Calu3 (cell line): ENCODE measurements at regions of chr10 and their contacts with region 1.

Region 1: GRCh38 chr10:51422311-51423120 is 276.9 kb downstream of the CSTF2T start:
- DNase-seq: peak; percentile 64
- H3K4me3 Mint-ChIP-seq: no peak overlapping the region
- H3K27ac Mint-ChIP-seq: no peak overlapping the region
- H3K4me1 Mint-ChIP-seq: no peaks in the 10 kb centered on the region
- H3K27me3 Mint-ChIP-seq: peaks cover 15% of the 10 kb centered on the region
- CTCF ChIP-seq: peak; percentile 41

Region 2: DNA sequence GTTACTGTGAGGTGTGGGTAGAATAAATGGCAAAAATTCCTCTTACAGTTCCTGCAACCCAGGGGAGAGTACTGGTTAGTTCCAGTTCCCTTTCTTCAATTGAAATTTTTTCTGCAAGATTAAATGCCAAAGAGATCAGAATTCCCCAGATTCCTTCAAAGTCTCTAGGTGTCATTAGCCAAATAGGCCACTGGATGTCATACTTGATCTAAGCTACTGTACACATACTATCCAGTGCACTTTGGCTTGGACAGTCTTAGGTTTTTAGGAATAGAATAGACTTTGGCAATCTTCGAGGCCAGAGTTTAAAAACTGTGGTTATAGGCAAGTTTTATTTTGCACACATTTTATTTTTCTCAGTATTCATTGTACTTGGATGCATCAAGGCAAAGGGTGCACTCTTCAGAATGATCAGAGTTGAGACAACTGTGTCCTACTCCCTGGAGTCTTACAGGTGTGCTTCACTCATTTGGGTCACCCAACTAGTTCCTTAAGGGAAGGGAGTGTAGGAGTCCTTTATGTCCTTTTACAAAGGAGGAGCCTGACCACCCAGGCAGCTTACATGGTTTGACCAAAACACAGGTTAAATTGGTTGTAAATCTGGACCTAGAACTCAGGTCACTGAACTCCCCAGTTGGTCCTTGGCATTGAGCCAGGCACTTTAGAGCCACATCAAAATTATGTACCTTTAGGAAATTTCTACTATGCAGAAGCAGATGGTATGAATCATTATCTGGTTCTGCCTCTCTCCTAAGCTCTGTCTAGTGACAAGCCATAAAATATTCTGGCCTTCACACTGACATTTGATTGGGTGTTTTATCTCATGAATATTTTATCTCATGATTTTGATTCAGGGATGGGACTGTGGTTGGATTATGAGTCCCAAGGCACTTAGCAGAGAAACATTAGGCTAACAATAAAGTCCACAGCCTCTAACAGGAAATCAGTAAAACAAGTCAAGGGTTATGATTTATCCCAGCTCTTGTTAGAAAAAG is 633.3 kb before region 1 on chr10:
- CTCF ChIA-PET with region 1: no interaction called
- intact Hi-C with region 1: loop called (anchors 5 kb)
- DNase-seq: peak; percentile 11
- H3K4me3 Mint-ChIP-seq: no peak overlapping the region
- H3K27ac Mint-ChIP-seq: no peak overlapping the region
- H3K4me1 Mint-ChIP-seq: peaks cover 8% of the 10 kb centered on the region
- H3K27me3 Mint-ChIP-seq: peaks cover 16% of the 10 kb centered on the region
- CTCF ChIP-seq: peak; percentile 52

Region 3: GRCh38 chr10:51001587-51001986 is 420.9 kb before region 1 on chr10:
- CTCF ChIA-PET with region 1: interaction called, 5 read pairs
- intact Hi-C with region 1: loop called (anchors 5 kb)
- DNase-seq: no peak
- H3K4me3 Mint-ChIP-seq: no peak overlapping the region
- H3K27ac Mint-ChIP-seq: no peak overlapping the region
- H3K4me1 Mint-ChIP-seq: no peaks in the 10 kb centered on the region
- H3K27me3 Mint-ChIP-seq: no peaks in the 10 kb centered on the region
- CTCF ChIP-seq: peak; percentile 28

Region 4: DNA sequence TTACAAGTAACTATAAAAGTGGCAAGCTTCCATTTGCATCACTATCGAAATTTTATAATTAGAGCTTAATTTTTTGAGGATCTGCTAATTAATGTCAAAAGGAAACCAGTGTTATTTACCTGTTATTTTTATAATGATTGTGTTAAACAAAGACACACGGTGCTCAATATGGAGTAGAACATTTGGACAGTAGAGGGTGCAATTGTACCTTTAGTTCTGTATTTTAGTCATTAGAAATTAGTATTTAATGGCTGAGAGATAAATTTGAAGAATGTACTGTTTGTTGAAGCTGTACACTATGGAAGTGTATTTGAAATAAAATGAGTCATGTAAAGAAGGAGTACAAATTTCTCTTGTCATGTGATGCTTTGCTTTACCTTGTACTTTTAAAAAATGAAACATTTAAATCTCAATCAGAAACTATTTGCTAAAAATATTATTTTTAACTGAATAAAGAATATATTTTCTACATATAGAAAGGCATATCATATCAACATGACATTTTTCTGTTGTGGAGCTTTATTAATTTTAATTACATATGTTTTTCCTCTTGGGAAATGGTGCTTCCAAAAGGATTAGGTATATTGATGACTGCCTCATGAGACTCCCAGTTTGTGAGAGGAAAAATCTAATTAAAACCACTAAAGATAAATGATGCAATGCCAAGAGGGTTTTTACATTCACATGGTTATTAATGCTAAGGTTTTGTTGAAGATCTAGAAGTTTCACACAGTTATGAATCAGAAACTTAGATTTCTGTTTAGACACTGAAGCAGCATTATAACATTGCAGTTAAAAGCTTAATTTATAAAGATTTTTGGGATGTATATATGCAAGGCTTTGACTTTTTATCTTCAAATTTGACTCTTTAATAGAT is 358.6 kb before region 1 on chr10:
- CTCF ChIA-PET with region 1: interaction called, 10 read pairs
- intact Hi-C with region 1: loop called (anchors 1 kb)
- DNase-seq: no peak
- H3K4me3 Mint-ChIP-seq: no peak overlapping the region
- H3K27ac Mint-ChIP-seq: no peak overlapping the region
- H3K4me1 Mint-ChIP-seq: no peaks in the 10 kb centered on the region
- H3K27me3 Mint-ChIP-seq: no peaks in the 10 kb centered on the region
- CTCF ChIP-seq: peak; percentile 44